ENCODE measurements at regions of chr2 and their contacts with region 1.

Region 1: GRCh38 chr2:44955593-44956392 is 14.3 kb downstream of the SIX3 start:
- DNase-seq: peak; percentile 54
- H3K4me3 ChIP-seq: peak overlapping the region in 2 of 3 experiments; percentile 25 to 32
- H3K27ac ChIP-seq: no peak overlapping the region
- H3K4me1 ChIP-seq: peaks cover 38% of the 10 kb centered on the region
- H3K27me3 ChIP-seq: peaks cover 25% of the 10 kb centered on the region
- CTCF ChIP-seq: peak; percentile 70 to 91

Region 2: GRCh38 chr2:44244129-44244871 is 711.5 kb before region 1 on chr2:
- CTCF ChIA-PET with region 1: no interaction called
- dilution Hi-C with region 1: no loop called
- in situ Hi-C with region 1: no loop called
- intact Hi-C with region 1: loop called (anchors 1 kb)
- DNase-seq: peak; percentile 37
- H3K4me3 ChIP-seq: peak overlapping the region in 2 of 3 experiments; percentile 39 to 46
- H3K27ac ChIP-seq: no peak overlapping the region
- H3K4me1 ChIP-seq: peaks cover 13% of the 10 kb centered on the region
- H3K27me3 ChIP-seq: no peaks in the 10 kb centered on the region
- CTCF ChIP-seq: peak; percentile 30 to 60

Region 3: GRCh38 chr2:44479122-44479887 is 476.5 kb before region 1 on chr2:
- CTCF ChIA-PET with region 1: interaction called, 14 read pairs
- dilution Hi-C with region 1: no loop called
- in situ Hi-C with region 1: loop called (anchors 25 kb)
- intact Hi-C with region 1: loop called (anchors 1 kb)
- DNase-seq: peak; percentile 69
- H3K4me3 ChIP-seq: no peak overlapping the region
- H3K27ac ChIP-seq: no peak overlapping the region
- H3K4me1 ChIP-seq: no peaks in the 10 kb centered on the region
- H3K27me3 ChIP-seq: no peaks in the 10 kb centered on the region
- CTCF ChIP-seq: peak; percentile 100

Region 4: GRCh38 chr2:44715671-44716081 is 240.1 kb before region 1 on chr2:
- CTCF ChIA-PET with region 1: no interaction called
- dilution Hi-C with region 1: no loop called
- in situ Hi-C with region 1: no loop called
- intact Hi-C with region 1: loop called (anchors 5 kb)
- DNase-seq: peak; percentile 56
- H3K4me3 ChIP-seq: no peak overlapping the region
- H3K27ac ChIP-seq: no peak overlapping the region
- H3K4me1 ChIP-seq: no peaks in the 10 kb centered on the region
- H3K27me3 ChIP-seq: no peaks in the 10 kb centered on the region
- CTCF ChIP-seq: peak; percentile 50 to 82

Region 5: GRCh38 chr2:44974064-44974715 is 18.4 kb after region 1 on chr2:
- CTCF ChIA-PET with region 1: interaction called, 6 read pairs
- dilution Hi-C with region 1: no loop called
- in situ Hi-C with region 1: no loop called
- intact Hi-C with region 1: loop called (anchors 1 kb)
- DNase-seq: peak; percentile 53
- H3K4me3 ChIP-seq: no peak overlapping the region
- H3K27ac ChIP-seq: no peak overlapping the region
- H3K4me1 ChIP-seq: peaks cover 5% of the 10 kb centered on the region
- H3K27me3 ChIP-seq: no peaks in the 10 kb centered on the region
- CTCF ChIP-seq: peak; percentile 54 to 78

Measured in mammary epithelial cell (primary cell).